ENCODE measurements at regions of chr13 and their contacts with region 1.

Region 1: DNA sequence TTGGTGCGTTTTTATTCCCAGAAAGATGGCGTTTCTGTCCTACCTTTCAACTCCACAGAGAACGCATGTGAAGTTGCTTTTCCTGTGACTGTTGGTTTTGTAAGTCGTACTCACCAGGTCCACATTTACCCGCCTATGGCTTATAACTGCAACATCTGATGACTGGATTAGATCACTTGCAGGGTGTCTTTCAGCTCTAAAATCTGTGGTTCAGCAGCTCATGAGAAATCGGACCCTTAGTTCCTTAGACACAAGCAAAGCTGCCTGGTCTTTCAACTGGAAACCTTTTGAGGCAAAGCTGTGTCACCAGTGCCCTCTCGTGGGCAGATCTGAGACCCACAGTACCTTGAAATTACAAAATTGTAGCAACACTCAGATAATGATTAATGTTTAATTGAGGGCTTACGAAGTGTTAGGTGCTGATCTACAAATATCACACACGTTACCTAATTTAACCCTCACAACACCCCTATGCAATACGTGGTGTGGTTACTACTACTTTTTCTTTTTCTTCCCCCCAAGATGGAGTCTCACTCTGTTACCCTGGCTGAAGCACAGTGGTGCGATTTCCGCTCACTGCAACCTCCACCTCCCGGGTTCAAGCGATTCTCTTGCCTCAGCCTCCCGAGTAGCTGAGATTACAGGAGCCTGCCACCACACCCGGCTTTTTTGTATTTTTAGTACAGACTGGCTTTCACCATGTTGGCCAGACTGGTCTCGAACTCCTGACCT is 65.4 kb downstream of the RUBCNL start:
- DNase-seq: peak; percentile 89
- H3K4me3 ChIP-seq: no peak overlapping the region
- H3K27ac ChIP-seq: peak overlapping the region; percentile 60
- H3K4me1 ChIP-seq: peaks cover 12% of the 10 kb centered on the region
- H3K27me3 ChIP-seq: no peaks in the 10 kb centered on the region
- CTCF ChIP-seq: peak; percentile 93

Region 2: DNA sequence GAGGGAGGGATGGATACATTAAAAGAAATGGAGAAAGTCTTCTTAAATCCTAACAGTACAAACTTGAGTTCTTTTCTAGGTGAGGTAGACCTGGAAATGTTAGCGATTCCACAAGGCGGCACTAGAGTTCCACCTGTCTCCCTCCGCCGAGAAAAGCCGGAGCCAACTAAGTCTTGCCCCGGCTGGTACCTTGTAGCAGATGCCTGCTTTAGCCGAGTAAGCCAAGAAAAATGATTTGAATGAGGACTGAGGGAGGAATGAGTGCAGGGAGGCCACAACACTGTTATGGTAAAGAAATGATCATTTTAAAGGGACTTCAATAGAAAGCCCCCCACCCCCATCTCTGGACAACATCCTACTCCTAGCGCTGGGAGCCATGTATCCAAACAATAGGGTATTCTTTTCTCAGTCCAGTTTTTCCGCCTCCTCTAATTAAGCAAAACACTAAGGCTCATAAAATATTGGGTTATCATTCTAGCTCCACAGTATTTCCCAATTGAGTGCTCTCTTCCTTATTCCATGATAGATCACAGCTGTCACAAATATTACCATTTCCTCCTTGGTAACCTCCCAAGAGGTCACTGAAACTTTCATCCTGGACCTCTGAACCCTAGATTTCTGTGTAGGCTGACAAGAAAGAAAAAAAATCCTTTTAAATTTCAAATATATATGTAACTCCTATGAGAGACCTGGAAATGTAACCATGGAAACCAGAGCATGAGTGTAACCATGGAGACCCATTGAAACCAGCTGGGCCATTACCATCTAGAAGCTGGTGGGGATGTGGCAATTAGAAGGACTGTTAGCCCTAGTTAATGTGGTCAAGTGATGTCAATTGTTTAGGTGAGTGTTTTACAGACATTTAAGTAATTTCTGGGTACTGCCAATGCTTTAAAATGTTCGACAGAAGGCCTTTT is 1274.0 kb before region 1 on chr13:
- CTCF ChIA-PET with region 1: no interaction called
- POLR2A ChIA-PET with region 1: no interaction called
- intact Hi-C with region 1: loop called (anchors 5 kb)
- DNase-seq: peak; percentile 88
- H3K4me3 ChIP-seq: peak overlapping the region; percentile 52
- H3K27ac ChIP-seq: no peak overlapping the region
- H3K4me1 ChIP-seq: peaks cover 4% of the 10 kb centered on the region
- H3K27me3 ChIP-seq: no peaks in the 10 kb centered on the region
- CTCF ChIP-seq: peak; percentile 86

Region 3: DNA sequence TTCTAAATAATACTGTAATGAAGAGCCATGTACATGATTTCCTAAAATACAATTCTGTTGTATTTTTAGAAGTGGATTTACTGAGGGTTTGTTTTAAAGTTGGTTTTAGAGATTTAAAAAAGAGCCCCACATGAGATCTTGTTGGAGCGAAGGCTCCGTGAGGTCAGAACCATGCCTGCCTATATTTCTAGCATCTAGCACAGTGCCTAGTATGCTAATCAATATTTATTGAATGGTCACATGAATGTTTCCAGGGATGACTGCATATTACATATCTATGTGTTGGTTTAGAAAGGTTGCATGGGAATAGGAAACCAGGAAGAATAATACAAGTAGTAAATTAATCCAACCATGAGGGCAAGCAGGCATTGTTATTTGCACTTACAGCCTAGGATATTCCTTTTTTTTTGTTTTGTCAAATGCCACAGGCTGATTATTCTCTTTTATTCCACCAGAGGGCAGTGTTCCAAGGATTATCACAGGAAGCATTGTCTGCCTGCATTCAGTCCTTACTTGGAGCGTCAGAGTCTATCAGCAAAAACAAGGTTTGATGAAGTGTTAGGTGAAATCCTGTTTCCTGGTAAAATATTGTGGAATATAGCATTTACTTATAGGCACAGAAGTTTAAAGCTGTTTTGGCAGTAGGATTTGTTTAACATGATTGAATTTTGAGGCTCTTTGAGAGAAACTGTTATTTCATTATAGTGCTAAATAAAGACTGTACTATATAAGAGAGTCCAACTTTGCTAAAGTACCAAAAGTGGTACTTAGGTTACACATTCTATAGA is 810.2 kb before region 1 on chr13:
- CTCF ChIA-PET with region 1: interaction called, 3 read pairs
- POLR2A ChIA-PET with region 1: no interaction called
- intact Hi-C with region 1: loop called (anchors 5 kb)
- DNase-seq: peak; percentile 87
- H3K4me3 ChIP-seq: no peak overlapping the region
- H3K27ac ChIP-seq: no peak overlapping the region
- H3K4me1 ChIP-seq: peaks cover 21% of the 10 kb centered on the region
- H3K27me3 ChIP-seq: no peaks in the 10 kb centered on the region
- CTCF ChIP-seq: peak; percentile 84

Region 4: GRCh38 chr13:46119883-46120614 is 201.6 kb before region 1 on chr13:
- CTCF ChIA-PET with region 1: no interaction called
- POLR2A ChIA-PET with region 1: no interaction called
- intact Hi-C with region 1: loop called (anchors 2 kb)
- DNase-seq: peak; percentile 92
- H3K4me3 ChIP-seq: no peak overlapping the region
- H3K27ac ChIP-seq: peak overlapping the region; percentile 99
- H3K4me1 ChIP-seq: peaks cover 92% of the 10 kb centered on the region
- H3K27me3 ChIP-seq: no peaks in the 10 kb centered on the region
- CTCF ChIP-seq: no peak

Region 5: GRCh38 chr13:46168341-46168740 is 153.3 kb before region 1 on chr13:
- CTCF ChIA-PET with region 1: no interaction called
- POLR2A ChIA-PET with region 1: interaction called, 12 read pairs
- intact Hi-C with region 1: no loop called
- DNase-seq: no peak
- H3K4me3 ChIP-seq: no peak overlapping the region
- H3K27ac ChIP-seq: no peak overlapping the region
- H3K4me1 ChIP-seq: peaks cover 28% of the 10 kb centered on the region
- H3K27me3 ChIP-seq: no peaks in the 10 kb centered on the region
- CTCF ChIP-seq: no peak